Dorsolateral prefrontal cortex (tissue), 120 donors: ENCODE measurements at regions of chr9 and their contacts with region 1.

Region 1: DNA sequence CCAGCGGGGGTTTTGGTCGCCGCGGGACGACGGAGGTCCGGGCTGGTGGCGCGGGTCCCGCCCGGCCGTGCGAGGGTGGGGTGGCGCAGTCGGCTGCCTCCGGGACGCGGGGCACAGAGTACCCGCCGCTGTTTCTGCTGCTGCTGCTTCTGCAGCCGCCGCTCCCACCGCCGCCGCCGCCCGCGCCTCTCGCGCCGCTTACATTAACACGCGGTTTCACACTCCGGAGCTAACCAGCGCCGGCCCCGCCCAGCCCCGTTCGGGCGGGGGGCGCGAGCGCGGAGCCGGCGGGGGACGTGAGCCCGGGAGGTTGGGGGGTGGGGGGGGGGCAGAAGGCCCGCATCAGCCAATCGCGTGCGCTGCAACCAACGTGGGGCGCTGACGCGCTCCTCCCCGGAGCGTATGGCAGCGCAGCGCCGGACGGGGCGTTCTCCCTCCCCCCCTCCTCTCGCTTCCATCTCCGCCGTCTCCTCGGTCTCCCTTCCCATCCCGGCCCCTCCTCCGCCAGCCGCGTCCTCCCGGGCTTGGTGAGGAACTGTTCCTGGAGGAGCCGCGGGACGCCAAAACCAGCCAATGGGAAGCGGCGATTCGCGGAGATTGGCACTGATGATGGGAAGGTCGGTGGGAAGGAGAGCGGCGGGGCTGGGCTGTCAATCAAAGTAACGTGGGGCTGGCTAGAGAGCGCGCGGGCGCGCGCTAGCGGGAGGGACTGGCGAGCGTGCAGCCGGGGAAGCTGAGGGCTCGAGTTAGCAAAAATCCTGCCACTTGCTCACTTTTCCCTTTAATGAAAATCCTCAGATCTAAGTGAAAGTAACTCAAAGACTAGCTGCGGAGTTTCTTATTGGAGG is at the start of gene TLE1:
- DNase-seq: peak; percentile 98 to 100 (median 100)
- H3K4me3 ChIP-seq: peak within 1 kb of the TSS; percentile 58 to 88 (median 78)
- H3K27ac ChIP-seq: peak within 1 kb of the TSS; percentile 52 to 95 (median 89)
- H3K27me3 ChIP-seq: no peaks in the 10 kb centered on the region
- CTCF ChIP-seq: peak in 14 of 56 donors; percentile 4 to 39 (median 26)
- total RNA-seq, gene TLE1: 21.6 to 65.6 (median 42.8) TPM

Region 2: DNA sequence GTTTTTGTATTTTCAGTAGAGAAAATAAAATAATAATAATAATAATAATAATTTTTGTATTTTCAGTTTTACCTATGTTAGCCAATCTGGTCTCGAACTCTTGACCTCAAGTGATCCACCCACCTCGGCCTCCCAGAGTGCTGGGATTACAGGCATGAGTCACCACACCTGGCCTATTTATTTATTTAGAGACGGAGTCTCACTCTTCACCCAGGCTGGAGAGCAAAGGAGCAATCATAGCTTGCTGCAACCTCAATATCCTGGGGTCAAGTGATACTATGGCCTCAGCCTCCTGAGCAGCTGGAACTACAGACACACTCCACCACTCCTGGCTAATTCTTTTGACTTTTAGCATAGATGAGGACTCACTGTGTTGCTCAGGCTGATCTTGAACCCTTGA is 167.7 kb before region 1 on chr9:
- intact Hi-C with region 1: loop called (anchors 2 to 5 kb)
- DNase-seq: no peak
- H3K4me3 ChIP-seq: no peak overlapping the region
- H3K27ac ChIP-seq: no peak overlapping the region
- H3K27me3 ChIP-seq: peaks cover 0 to 20% (median 0%) of the 10 kb centered on the region in 45 donors
- CTCF ChIP-seq: no peak

Region 3: DNA sequence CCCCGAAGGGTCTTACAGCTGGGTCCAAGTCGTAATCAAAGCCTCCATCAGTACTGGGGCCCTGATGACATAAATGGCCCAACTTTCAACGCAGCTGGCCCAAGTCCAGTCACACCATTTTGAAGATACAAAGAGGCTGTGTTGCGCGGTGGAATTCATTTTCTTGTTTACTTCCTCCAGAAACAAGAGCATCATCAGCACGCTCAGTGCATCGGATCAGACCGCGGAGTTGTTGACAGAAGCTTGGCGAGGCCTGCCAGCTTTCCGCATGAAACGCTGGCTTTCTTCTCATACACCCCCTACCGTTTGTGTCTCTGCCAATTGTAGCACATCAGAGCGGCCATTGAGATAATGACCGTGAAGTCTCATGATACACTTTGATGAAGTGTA is 136.9 kb after region 1 on chr9:
- intact Hi-C with region 1: loop called (anchors 1 kb)
- DNase-seq: peak; percentile 65 to 95 (median 89)
- H3K4me3 ChIP-seq: peak overlapping the region in 25 of 59 donors; percentile 0 to 52 (median 20)
- H3K27ac ChIP-seq: peak overlapping the region in 58 of 59 donors; percentile 7 to 89 (median 70)
- H3K27me3 ChIP-seq: peaks cover 0 to 23% (median 0%) of the 10 kb centered on the region in 45 donors
- CTCF ChIP-seq: peak in 48 of 56 donors; percentile 15 to 69 (median 42)

Region 4: GRCh38 chr9:81848472-81848871 is 158.9 kb after region 1 on chr9:
- intact Hi-C with region 1: loop called in 1 of 2 experiments (anchors 5 kb)
- DNase-seq: no peak
- H3K4me3 ChIP-seq: no peak overlapping the region
- H3K27ac ChIP-seq: no peak overlapping the region
- H3K27me3 ChIP-seq: peaks cover 0 to 29% (median 0%) of the 10 kb centered on the region in 45 donors
- CTCF ChIP-seq: peak in 55 of 56 donors; percentile 15 to 75 (median 59)